ENCODE measurements at regions of chr19 and their contacts with region 1.

Region 1: DNA sequence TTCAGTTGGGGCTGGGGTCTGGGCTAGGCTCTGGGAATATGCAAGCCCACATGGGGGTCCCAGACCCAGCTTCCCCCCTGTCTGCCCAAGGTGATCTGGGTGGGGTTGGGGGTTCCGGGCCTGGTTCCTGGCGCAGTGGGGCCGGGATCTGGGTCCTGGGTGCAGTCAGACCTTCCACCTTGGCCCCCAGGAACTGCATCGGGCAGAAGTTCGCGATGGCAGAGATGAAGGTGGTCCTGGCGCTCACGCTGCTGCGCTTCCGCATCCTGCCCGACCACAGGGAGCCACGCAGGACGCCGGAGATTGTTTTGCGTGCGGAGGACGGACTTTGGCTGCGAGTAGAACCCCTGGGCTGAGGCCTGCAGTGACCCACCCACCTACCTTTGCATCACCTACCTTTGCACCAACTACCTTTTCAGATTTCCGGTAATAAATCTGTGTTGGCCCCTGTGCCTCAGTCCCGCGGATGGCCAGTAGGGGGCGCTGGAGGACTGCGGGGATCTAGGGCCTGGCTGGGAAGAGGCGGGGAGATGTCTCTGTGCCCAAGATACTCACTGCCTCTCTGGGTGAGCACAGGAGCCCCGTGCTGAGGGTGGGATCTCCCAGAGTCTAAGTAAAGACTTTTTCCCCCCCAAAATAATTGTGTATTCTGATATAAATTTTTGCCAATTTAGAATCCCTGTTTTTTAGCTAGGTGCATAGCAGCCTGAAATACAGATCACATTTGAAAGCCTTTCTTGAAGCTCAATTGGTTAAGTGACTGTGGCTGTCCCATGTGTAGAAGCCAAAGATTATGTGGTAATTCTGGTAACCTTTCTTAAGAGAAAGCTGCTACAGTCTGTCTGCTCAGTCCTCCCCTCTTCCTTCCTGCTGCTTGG is 11.5 kb upstream of the CYP4F3 start:
- DNase-seq: peak; percentile 69
- H3K4me3 Mint-ChIP-seq: no peak overlapping the region
- H3K27ac Mint-ChIP-seq: no peak overlapping the region
- H3K4me1 Mint-ChIP-seq: no peaks in the 10 kb centered on the region
- H3K27me3 Mint-ChIP-seq: no peaks in the 10 kb centered on the region
- CTCF ChIP-seq: peak; percentile 95

Region 2: DNA sequence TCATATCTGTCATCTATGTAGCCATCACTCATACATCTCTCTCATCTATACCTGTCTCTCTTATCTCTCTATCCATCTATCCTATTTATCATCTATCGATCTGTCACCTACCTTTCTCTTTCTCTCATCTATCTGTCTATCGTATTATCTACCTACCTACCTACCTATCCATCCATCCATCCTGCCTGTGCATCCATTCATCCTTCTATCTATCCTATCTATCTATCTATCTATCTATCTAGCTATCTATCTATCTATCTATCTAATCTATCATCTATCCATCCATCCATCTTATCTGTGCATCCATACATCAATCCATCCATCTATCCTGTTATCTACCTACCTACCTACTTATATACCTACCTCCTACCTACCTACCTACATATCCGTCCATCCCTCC is 58.8 kb before region 1 on chr19:
- CTCF ChIA-PET with region 1: no interaction called
- POLR2A ChIA-PET with region 1: no interaction called
- intact Hi-C with region 1: no loop called
- DNase-seq: no peak
- H3K4me3 Mint-ChIP-seq: no peak overlapping the region
- H3K27ac Mint-ChIP-seq: no peak overlapping the region
- H3K4me1 Mint-ChIP-seq: no peaks in the 10 kb centered on the region
- H3K27me3 Mint-ChIP-seq: peaks cover 48% of the 10 kb centered on the region
- CTCF ChIP-seq: no peak

Region 3: GRCh38 chr19:15649526-15649925 is 20.3 kb after region 1 on chr19:
- CTCF ChIA-PET with region 1: interaction called, 22 read pairs
- POLR2A ChIA-PET with region 1: interaction called, 3 read pairs
- intact Hi-C with region 1: no loop called
- DNase-seq: no peak
- H3K4me3 Mint-ChIP-seq: no peak overlapping the region
- H3K27ac Mint-ChIP-seq: no peak overlapping the region
- H3K4me1 Mint-ChIP-seq: no peaks in the 10 kb centered on the region
- H3K27me3 Mint-ChIP-seq: peaks cover 10% of the 10 kb centered on the region
- CTCF ChIP-seq: no peak

Region 4: GRCh38 chr19:15810335-15810734 is 181.1 kb after region 1 on chr19:
- CTCF ChIA-PET with region 1: interaction called, 9 read pairs
- POLR2A ChIA-PET with region 1: no interaction called
- intact Hi-C with region 1: loop called (anchors 2 kb)
- DNase-seq: peak; percentile 25
- H3K4me3 Mint-ChIP-seq: no peak overlapping the region
- H3K27ac Mint-ChIP-seq: no peak overlapping the region
- H3K4me1 Mint-ChIP-seq: no peaks in the 10 kb centered on the region
- H3K27me3 Mint-ChIP-seq: peaks cover 19% of the 10 kb centered on the region
- CTCF ChIP-seq: no peak

Region 5: DNA sequence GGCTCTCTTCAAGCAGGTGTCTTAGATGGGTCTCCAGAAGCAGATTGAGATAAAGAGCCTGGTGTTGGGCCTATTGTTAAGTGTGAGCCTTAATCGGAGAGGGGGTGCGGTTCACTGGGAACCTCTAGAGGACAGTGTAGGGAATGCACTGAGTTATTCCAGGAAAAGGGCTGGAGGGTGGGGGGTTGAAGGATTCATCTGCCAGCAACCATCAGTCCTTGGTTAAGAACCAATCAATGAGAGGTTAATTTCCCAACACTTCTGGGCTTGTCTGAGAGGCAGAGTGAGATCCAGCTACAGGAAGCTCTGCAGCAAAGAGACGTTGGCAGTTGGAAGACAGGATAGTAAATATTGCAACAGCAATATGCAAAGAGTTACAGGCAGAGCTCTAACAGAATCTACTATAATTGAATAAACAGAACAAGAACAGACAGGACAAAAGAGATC is 239.9 kb after region 1 on chr19:
- CTCF ChIA-PET with region 1: interaction called, 4 read pairs
- POLR2A ChIA-PET with region 1: no interaction called
- intact Hi-C with region 1: loop called (anchors 1 kb)
- DNase-seq: peak; percentile 60
- H3K4me3 Mint-ChIP-seq: no peak overlapping the region
- H3K27ac Mint-ChIP-seq: no peak overlapping the region
- H3K4me1 Mint-ChIP-seq: no peaks in the 10 kb centered on the region
- H3K27me3 Mint-ChIP-seq: no peaks in the 10 kb centered on the region
- CTCF ChIP-seq: peak; percentile 57

Region 6: GRCh38 chr19:16025108-16026101 is 396.2 kb after region 1 on chr19:
- CTCF ChIA-PET with region 1: no interaction called
- POLR2A ChIA-PET with region 1: no interaction called
- intact Hi-C with region 1: loop called (anchors 5 kb)
- DNase-seq: peak; percentile 74
- H3K4me3 Mint-ChIP-seq: no peak overlapping the region
- H3K27ac Mint-ChIP-seq: no peak overlapping the region
- H3K4me1 Mint-ChIP-seq: peaks cover 4% of the 10 kb centered on the region
- H3K27me3 Mint-ChIP-seq: no peaks in the 10 kb centered on the region
- CTCF ChIP-seq: peak; percentile 39